ENCODE measurements at regions of chr7 and their contacts with region 1.

Region 1: GRCh38 chr7:47039904-47040303 is 542.0 kb downstream of the TNS3 start:
- DNase-seq: peak in 3 of 5 donors; percentile 35 to 63 (median 59)
- ATAC-seq: peak; percentile 79 to 88 (median 80)
- H3K4me3 ChIP-seq: no peak overlapping the region
- H3K27ac ChIP-seq: peak overlapping the region; percentile 50 to 85 (median 79)
- H3K4me1 ChIP-seq: peaks cover 13 to 54% (median 38%) of the 10 kb centered on the region in 12 donors
- H3K27me3 ChIP-seq: no peaks in the 10 kb centered on the region
- CTCF ChIP-seq: no peak
- POLR2A ChIP-seq: no peak

Region 2: DNA sequence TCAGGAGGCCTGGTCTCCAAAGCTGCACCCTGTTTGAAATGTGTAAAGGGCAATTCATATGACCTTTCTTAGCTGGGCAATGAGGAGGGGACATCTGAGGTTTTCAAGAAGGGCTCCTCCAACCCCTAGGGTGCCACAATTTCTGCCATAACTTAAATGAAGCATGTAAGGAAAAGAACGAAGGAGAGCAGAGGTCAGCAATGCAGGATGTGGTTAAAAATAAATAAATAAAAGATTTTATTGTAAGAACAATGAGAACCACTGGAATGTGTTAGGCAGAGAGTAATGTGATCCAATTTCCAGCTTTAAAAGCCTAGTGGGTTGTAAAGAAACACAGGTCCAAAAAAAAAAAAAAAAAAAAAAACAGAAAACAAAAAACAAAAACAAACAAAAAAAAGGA is 131.1 kb before region 1 on chr7:
- intact Hi-C with region 1: no loop called
- DNase-seq: no peak
- ATAC-seq: no peak
- H3K4me3 ChIP-seq: no peak overlapping the region
- H3K27ac ChIP-seq: no peak overlapping the region
- H3K4me1 ChIP-seq: no peaks in the 10 kb centered on the region
- H3K27me3 ChIP-seq: no peaks in the 10 kb centered on the region
- CTCF ChIP-seq: no peak
- POLR2A ChIP-seq: no peak

Region 3: DNA sequence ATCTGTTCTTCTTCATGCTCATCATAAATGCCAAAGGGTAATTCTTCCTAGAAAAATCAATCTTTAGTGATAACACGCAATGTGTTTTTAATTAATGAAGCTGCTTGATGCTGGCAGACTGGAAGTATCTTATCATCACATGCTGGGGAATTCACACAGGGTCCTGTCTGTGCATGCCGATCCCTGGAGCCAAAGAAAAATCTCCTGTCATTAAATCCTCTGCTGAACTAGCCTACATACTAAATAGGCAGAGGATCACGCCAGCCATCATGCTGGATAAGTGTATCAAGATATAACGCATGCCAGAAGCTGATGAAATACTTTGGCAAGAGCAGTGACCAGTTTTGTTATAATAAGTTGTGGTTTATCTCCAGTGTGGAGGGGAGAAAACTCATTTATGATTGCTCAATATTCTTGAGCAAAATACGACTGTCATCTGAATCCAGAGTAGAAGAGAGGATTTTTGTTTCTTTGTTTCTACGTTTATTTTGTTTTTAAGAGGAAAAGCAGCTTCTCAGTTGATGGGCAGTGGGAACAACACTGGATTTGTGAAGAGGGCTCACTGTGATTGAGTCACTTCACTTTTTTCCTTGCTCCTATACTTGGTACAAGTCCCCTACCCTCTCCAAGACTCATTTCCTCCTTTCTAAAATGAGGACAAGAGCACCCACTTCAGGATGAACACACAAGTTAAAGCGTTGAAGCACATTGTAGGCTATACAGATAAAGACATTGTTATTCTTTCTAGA is 107.1 kb before region 1 on chr7:
- intact Hi-C with region 1: loop called in 2 of 10 experiments (anchors 5 to 10 kb)
- DNase-seq: peak in 3 of 5 donors; percentile 26 to 59 (median 37)
- ATAC-seq: peak; percentile 59 to 85 (median 73)
- H3K4me3 ChIP-seq: no peak overlapping the region
- H3K27ac ChIP-seq: peak overlapping the region in 10 of 12 donors; percentile 8 to 71 (median 37)
- H3K4me1 ChIP-seq: peaks cover 0 to 36% (median 20%) of the 10 kb centered on the region in 12 donors
- H3K27me3 ChIP-seq: no peaks in the 10 kb centered on the region
- CTCF ChIP-seq: peak in 6 of 12 donors; percentile 10 to 49 (median 22)
- POLR2A ChIP-seq: no peak

Region 4: GRCh38 chr7:46996972-46997371 is 42.9 kb before region 1 on chr7:
- intact Hi-C with region 1: loop called in 1 of 10 experiments (anchors 5 kb)
- DNase-seq: peak in 3 of 5 donors; percentile 24 to 52 (median 36)
- ATAC-seq: peak in 3 of 4 donors; percentile 36 to 70 (median 48)
- H3K4me3 ChIP-seq: no peak overlapping the region
- H3K27ac ChIP-seq: no peak overlapping the region
- H3K4me1 ChIP-seq: peaks cover 0 to 13% (median 0%) of the 10 kb centered on the region in 12 donors
- H3K27me3 ChIP-seq: no peaks in the 10 kb centered on the region
- CTCF ChIP-seq: no peak
- POLR2A ChIP-seq: no peak

Measured in heart left ventricle (tissue), 16 donors.